ENCODE measurements at regions of chr12 and their contacts with region 1.

Region 1: DNA sequence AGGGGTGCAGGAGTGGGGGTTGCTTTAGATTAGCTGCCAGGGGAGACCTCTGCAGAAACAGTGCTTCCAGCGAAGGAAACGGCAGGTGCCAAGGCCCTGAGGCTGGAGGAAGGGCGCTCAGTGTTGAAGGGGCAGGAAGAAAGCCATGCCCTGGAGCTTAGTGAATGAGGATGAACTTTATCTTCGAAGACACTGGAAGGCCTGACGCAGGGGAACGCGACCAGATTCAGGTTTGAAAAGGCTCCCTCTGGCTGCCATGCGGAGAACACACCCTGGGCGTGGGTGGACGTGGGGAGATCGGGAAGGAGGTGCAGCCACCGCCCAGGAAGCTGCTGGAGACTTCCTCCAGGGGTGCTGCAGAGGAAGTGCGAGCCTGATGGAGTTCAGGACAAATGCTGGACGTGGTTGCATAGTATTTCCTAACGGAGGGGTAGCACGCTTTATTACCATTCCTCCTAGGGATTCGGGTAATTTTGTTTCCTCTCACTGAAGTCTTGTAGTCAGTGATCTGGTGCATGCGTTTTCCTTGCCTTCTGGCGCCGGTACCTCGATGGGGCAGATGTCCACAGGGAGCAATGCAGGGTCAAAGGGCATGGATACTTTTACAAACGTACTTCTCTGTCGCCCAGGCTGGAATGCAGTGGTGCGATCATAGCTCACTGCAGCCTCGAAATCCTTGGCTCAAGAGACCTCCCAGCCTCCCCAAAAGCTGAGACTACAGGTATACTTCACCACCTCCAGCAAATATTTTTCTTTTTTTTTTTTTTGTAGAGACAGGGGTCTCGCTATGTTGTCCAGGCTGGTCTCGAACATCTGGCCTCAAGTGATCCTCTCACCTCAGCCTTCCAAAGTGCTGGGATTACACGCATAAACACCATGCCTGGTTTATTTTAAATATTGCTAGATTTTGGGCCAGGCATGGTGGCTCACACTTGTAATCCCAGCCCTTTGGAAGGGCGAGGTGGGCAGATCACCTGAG is 26.4 kb upstream of the UBC start:
- DNase-seq: peak; percentile 88
- H3K4me3 ChIP-seq: peak overlapping the region; percentile 4 to 58 (median 30)
- H3K27ac ChIP-seq: peak overlapping the region; percentile 37
- H3K4me1 ChIP-seq: peaks cover 33% of the 10 kb centered on the region
- H3K27me3 ChIP-seq: no peaks in the 10 kb centered on the region
- CTCF ChIP-seq: peak; percentile 95 to 97

Region 2: DNA sequence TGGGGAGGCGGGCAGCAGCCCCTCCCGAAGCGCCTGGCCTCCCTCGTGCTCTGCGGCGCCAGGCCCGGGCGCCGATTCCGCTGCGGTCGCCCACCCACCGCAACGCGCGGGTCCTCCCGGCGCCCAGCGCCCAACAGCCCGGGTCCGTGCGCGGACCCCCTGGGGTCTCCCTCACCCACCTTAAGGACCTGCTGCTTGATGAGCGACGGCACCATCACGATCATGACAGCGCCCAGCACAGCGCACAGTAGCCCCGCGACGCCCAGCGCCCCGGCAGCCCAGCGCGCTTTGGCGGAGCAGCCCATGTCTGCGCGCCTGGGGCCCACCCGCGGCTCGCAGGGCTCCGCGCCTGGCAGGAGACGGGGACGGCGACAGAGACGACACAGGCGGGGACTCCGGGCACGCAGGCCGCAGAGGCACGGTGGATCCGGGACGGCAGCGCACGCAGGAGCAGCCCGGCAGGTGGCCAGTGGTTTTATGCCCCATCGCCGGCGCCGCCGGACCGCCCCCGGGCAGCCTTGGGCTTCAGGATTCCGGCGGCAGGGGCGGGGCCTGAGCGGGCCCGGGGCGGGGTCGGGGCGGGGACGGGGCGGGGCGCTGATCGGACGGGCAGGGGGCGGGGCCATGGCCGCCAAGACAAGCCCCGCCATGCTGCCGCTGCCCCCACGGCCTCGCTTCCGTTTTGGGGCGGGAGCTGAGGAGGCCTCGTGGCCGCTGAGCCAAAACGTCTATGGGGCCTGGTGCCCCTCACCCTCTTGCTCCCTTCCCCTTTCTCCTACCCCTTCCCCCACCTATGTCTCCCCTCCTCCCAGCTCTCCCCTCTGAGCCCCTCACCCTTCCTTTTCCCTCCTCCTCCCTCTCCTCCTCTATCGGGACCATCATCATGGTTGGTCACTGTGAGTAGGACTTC is 77.2 kb before region 1 on chr12 and contains the start of gene SCARB1:
- CTCF ChIA-PET with region 1: no interaction called
- dilution Hi-C with region 1: no loop called
- in situ Hi-C with region 1: no loop called
- intact Hi-C with region 1: loop called (anchors 2 kb)
- DNase-seq: peak; percentile 72
- H3K4me3 ChIP-seq: peak within 1 kb of the TSS; percentile 74 to 91 (median 78)
- H3K27ac ChIP-seq: peak within 1 kb of the TSS; percentile 36
- H3K4me1 ChIP-seq: peaks cover 20% of the 10 kb centered on the region
- H3K27me3 ChIP-seq: no peaks in the 10 kb centered on the region
- CTCF ChIP-seq: no peak
- total RNA-seq, gene SCARB1: 44.8 to 60.9 TPM

Region 3: DNA sequence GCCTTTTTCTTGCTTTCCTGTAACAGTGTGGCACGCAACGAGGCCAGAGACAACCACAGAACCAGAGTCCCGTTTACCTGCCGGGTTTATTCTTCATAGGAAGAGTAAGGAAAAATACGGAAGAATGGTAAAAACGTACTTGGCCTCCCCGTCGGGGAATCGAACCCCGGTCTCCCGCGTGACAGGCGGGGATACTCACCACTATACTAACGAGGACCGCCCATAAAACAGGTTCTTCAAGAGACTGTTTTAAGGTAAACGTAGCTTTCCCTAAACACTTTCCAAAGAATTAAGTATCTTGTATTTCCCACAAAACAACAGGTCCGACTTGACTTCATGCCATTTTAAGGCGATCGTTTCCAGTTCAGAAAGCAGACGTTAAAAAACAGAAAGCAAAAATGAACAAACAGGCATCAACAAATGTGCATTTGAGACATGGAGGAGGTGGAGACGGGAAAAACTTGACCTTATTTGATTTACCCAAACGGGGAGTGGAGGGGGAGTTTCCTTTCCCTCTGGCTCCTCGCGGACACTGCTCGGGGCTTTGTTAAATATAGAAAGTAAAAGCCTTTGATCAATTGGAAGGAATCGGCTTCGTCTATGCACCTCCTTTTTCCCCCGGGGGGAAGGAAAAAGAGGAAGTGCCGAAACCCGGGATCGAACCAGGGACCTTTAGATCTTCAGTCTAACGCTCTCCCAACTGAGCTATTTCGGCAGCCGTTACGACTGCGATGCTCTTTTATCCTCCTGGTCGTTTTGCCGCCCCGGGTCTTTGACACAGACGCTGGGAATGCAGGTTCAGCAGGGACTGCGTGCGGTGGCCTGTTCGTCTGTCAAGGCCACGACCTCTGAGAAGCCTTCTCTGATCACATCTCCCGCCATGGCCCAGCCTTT is 13.4 kb before region 1 on chr12:
- CTCF ChIA-PET with region 1: no interaction called
- dilution Hi-C with region 1: no loop called
- in situ Hi-C with region 1: no loop called
- intact Hi-C with region 1: loop called (anchors 1 kb)
- DNase-seq: peak; percentile 87
- H3K4me3 ChIP-seq: peak overlapping the region; percentile 59 to 83 (median 64)
- H3K27ac ChIP-seq: peak overlapping the region; percentile 96
- H3K4me1 ChIP-seq: peaks cover 26% of the 10 kb centered on the region
- H3K27me3 ChIP-seq: no peaks in the 10 kb centered on the region
- CTCF ChIP-seq: no peak

Region 4: DNA sequence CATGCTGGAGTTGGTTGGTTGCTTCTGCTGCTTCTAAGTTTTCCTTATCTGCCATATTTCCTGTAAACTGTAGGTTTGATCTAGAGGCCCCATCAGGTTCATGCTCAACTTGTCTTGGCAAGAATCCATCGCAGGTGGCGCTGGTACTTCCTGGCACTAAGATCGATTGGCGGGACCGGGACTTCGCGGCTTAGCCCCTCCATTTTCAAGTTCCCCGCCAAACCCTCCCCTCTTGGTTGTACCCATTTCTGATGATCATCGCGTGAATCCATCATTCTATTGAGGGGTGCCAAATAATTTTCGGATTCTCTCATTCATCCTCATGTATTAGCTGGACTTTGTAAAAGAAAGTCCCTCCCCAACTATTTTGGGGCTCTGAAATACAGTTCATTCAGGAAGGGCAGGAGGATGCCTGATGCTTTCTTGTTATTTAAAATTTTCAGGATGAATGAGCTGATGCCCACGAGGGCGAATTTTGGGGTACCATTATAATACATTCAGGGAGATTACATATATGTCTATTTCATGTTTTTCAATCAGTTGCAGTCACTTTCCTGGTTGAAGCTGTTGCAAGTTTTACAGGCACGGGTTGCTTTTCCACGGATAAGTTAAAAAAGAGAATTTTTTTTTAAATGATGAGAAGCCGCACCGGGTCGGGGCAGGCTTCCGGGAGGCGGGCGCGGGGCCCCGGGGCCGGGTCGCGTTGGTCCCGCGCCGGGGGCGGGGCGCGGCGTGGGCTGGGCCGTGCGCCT is 52.2 kb after region 1 on chr12:
- CTCF ChIA-PET with region 1: interaction called, 10 read pairs
- dilution Hi-C with region 1: no loop called
- in situ Hi-C with region 1: no loop called
- intact Hi-C with region 1: loop called (anchors 2 kb)
- DNase-seq: peak; percentile 68
- H3K4me3 ChIP-seq: peak overlapping the region; percentile 68 to 89 (median 79)
- H3K27ac ChIP-seq: peak overlapping the region; percentile 12
- H3K4me1 ChIP-seq: peaks cover 17% of the 10 kb centered on the region
- H3K27me3 ChIP-seq: no peaks in the 10 kb centered on the region
- CTCF ChIP-seq: peak; percentile 35 to 53

Region 5: DNA sequence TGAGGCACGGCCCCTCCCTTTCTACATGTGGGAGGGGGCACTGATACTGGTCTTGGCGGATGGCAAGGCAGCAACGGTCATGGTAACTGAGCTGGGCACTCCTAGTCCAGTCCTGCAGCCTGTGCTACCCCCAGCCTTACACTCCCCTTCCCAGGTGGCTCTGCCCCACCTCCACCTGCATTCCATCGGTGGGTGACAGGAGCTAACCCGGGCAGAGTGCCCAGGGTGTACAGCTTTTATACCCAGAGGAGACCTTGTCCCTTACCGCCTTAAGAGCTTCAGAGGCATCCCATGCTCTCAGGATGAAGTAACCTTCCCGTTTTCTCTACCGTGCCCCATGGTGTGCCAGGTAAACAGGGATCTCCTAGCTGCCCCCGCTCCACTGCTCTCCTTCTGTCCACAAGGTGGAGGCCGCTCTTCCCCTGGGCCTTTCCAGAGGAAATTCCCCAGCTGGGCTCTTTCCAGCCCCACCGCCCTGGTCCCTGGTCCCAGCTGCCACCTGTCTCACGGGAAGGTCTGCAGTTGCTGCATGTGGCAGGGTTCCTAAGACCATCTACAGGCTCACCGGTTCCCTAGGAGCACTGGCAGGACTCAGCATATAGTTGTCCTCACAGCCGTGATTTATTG is 73.1 kb after region 1 on chr12:
- CTCF ChIA-PET with region 1: no interaction called
- dilution Hi-C with region 1: loop called (anchors 5 kb)
- in situ Hi-C with region 1: no loop called
- intact Hi-C with region 1: no loop called
- DNase-seq: no peak
- H3K4me3 ChIP-seq: no peak overlapping the region
- H3K27ac ChIP-seq: no peak overlapping the region
- H3K4me1 ChIP-seq: no peaks in the 10 kb centered on the region
- H3K27me3 ChIP-seq: no peaks in the 10 kb centered on the region
- CTCF ChIP-seq: no peak

Region 6: DNA sequence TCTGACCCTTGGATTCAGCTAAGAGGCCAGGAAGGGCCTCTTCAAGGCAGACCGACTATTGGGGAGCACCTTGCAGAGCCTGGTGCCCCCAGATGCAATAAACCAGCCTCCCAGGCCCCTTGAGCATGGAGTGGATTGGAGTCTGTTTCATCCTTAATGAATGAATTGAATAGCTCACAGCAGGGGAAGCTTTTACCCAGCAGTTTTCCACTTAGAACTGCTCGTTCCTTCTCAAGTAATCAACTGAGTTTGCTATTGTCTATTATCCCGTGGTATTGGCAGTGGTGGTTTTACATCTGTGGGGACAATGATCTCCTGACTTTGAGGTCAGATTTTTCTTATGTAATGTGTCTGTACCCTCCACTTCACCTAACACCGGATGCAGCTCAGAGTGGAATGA is 322.0 kb after region 1 on chr12:
- CTCF ChIA-PET with region 1: no interaction called
- dilution Hi-C with region 1: no loop called
- in situ Hi-C with region 1: no loop called
- intact Hi-C with region 1: no loop called
- DNase-seq: no peak
- H3K4me3 ChIP-seq: no peak overlapping the region
- H3K27ac ChIP-seq: no peak overlapping the region
- H3K4me1 ChIP-seq: no peaks in the 10 kb centered on the region
- H3K27me3 ChIP-seq: no peaks in the 10 kb centered on the region
- CTCF ChIP-seq: no peak

Measured in mammary epithelial cell (primary cell).